ENCODE measurements at regions of chr17 and their contacts with region 1.

Region 1: GRCh38 chr17:40086150-40087044 is 14.0 kb downstream of the NR1D1 start:
- DNase-seq: peak; percentile 58 to 79 (median 75)
- H3K4me3 ChIP-seq: no peak overlapping the region
- H3K27ac ChIP-seq: no peak overlapping the region
- H3K4me1 ChIP-seq: no peaks in the 10 kb centered on the region
- H3K27me3 ChIP-seq: no peaks in the 10 kb centered on the region

Region 2: DNA sequence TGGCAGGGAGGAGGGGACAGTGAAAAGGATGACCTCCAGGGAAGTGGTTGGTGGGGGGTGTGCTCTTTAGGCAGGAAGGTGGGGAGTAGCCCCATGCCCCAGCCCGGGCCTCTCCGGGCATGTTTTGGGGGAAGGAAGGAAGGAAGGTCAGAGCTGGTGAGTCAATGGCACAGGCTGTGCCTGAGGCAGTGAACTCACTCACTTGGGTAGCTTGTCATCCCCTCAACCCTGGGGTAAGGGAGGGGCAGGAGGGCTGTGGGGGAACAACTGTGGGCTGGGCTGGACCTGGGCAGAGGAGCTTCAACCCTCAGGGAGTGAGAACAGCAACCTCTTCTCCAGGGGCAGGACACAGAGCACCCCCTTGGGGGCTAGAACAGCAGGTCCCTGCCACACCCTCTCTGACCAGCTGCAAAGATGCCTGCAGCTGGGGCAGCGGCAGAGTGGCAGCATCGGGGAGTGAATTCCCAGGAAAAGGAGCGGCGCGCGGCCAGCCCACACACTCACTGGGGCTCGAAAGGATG is 64.9 kb before region 1 on chr17:
- CTCF ChIA-PET with region 1: interaction called, 18 read pairs
- POLR2A ChIA-PET with region 1: no interaction called
- DNase-seq: no peak
- H3K4me3 ChIP-seq: no peak overlapping the region
- H3K27ac ChIP-seq: no peak overlapping the region
- H3K4me1 ChIP-seq: peaks cover 0 to 6% (median 0%) of the 10 kb centered on the region in 4 experiments
- H3K27me3 ChIP-seq: no peaks in the 10 kb centered on the region

Region 3: DNA sequence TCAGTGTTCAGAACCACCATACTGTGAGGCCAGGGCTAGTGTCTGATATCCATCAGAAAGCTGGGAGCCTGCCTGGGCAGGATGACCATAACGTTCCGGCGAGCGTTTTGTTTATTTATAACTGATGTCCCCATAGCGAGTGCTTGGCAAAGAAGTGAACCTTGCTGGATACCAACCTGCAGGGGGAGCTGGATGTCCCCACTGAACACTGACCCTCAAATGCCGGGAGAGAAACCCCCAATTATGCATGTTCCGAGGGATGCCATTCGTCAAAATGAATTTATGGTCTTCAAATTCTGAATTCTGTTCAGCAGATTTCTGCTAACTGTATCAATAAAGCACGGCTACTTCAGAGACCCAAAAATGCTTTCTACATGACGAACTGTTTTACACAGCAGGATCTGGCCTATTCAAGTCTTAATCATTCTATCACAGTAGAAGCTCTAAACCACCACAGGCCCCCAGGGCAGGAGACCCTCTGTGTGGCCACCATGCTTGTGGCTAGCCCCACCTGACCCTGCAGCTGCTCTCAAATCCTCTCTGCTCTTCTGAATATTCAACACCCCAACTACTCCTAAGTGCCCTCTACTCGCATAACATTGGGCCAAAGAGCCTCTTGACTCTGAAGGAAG is 47.4 kb before region 1 on chr17:
- CTCF ChIA-PET with region 1: interaction called, 50 read pairs
- POLR2A ChIA-PET with region 1: no interaction called
- DNase-seq: peak; percentile 47 to 68 (median 64)
- H3K4me3 ChIP-seq: no peak overlapping the region
- H3K27ac ChIP-seq: no peak overlapping the region
- H3K4me1 ChIP-seq: peaks cover 0 to 5% (median 2%) of the 10 kb centered on the region in 4 experiments
- H3K27me3 ChIP-seq: no peaks in the 10 kb centered on the region

Region 4: DNA sequence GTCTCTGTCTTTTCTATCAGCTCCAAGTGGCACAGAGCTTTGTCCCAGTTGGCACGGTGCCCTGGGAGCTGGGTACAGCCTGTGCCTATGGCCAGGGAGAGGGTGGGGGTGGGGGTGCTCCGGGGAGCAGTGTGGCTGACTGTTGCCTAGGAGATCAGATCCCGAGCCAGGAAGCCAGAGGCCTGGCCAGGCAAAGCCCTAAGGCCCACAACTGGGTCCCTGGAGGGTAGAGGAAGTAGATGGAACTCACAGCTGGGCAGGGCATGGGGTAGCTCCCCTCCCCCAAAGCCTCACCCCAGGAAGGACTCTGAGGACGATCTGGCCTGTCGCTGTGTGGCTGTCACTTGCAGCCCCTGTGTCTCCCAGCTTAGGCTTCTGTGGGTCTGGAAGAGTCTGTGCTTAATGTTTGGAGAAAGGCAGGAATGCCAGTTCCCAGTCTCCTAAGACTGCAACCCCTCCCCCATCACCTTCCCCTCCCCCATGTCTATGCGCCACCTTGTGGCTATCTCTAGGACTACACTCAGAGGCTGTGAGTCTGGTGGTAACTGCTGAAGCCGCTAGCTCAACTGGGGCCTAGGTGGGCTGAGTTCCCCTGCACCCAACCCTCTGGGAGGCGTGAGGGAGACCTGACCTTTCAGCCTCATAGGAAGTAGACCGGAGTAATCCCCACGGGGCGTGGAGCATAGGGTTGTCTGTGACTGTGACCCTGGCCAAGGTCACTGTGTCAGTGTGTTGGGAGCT is 11.0 kb before region 1 on chr17:
- CTCF ChIA-PET with region 1: interaction called, 71 read pairs
- POLR2A ChIA-PET with region 1: no interaction called
- DNase-seq: peak; percentile 60 to 81 (median 80)
- H3K4me3 ChIP-seq: peak overlapping the region in 2 of 7 experiments; percentile 7 to 32
- H3K27ac ChIP-seq: peak overlapping the region in 1 of 2 experiments; percentile 39
- H3K4me1 ChIP-seq: peaks cover 4 to 51% (median 46%) of the 10 kb centered on the region in 4 experiments
- H3K27me3 ChIP-seq: no peaks in the 10 kb centered on the region

Region 5: GRCh38 chr17:40107522-40108174 is 21.3 kb after region 1 on chr17:
- CTCF ChIA-PET with region 1: interaction called, 28 read pairs
- POLR2A ChIA-PET with region 1: no interaction called
- DNase-seq: peak; percentile 32 to 58 (median 53)
- H3K4me3 ChIP-seq: peak overlapping the region in 2 of 7 experiments; percentile 1 to 17
- H3K27ac ChIP-seq: peak overlapping the region in 1 of 2 experiments; percentile 44
- H3K4me1 ChIP-seq: peaks cover 20 to 90% (median 77%) of the 10 kb centered on the region in 4 experiments
- H3K27me3 ChIP-seq: no peaks in the 10 kb centered on the region